ENCODE measurements at regions of chr1 and their contacts with region 1.

Region 1: GRCh38 chr1:156689035-156689952 is 12.1 kb upstream of the NES start:
- DNase-seq: peak; percentile 80
- H3K4me3 ChIP-seq: no peak overlapping the region
- H3K27ac ChIP-seq: no peak overlapping the region
- H3K4me1 ChIP-seq: peaks cover 4 to 28% (median 12%) of the 10 kb centered on the region in 4 donors
- H3K27me3 ChIP-seq: peaks cover 89% of the 10 kb centered on the region
- CTCF ChIP-seq: peak; percentile 86 to 92 (median 91)
- EP300 ChIP-seq: no peak
- POLR2A ChIP-seq: no peak

Region 2: GRCh38 chr1:156489166-156489934 is 199.9 kb before region 1 on chr1:
- in situ Hi-C with region 1: no loop called
- intact Hi-C with region 1: no loop called
- DNase-seq: no peak
- H3K4me3 ChIP-seq: peak overlapping the region in 2 of 4 donors; percentile 4 to 32
- H3K27ac ChIP-seq: peak overlapping the region; percentile 69 to 100 (median 100)
- H3K4me1 ChIP-seq: peaks cover 74 to 82% (median 77%) of the 10 kb centered on the region in 4 donors
- H3K27me3 ChIP-seq: no peaks in the 10 kb centered on the region
- CTCF ChIP-seq: no peak
- EP300 ChIP-seq: no peak
- POLR2A ChIP-seq: no peak

Region 3: GRCh38 chr1:156725683-156726280 is 36.5 kb after region 1 on chr1:
- in situ Hi-C with region 1: loop called in 1 of 4 experiments (anchors 5 kb)
- intact Hi-C with region 1: loop called (anchors 1 kb)
- DNase-seq: peak; percentile 91
- H3K4me3 ChIP-seq: peak overlapping the region in 3 of 4 donors; percentile 10 to 71 (median 12)
- H3K27ac ChIP-seq: peak overlapping the region; percentile 42 to 98 (median 74)
- H3K4me1 ChIP-seq: peaks cover 25 to 46% (median 38%) of the 10 kb centered on the region in 4 donors
- H3K27me3 ChIP-seq: no peaks in the 10 kb centered on the region
- CTCF ChIP-seq: peak; percentile 92 to 96 (median 93)
- EP300 ChIP-seq: no peak
- POLR2A ChIP-seq: no peak

Region 4: GRCh38 chr1:156860113-156860627 is 170.9 kb after region 1 on chr1:
- in situ Hi-C with region 1: loop called in 2 of 4 experiments (anchors 25 kb)
- intact Hi-C with region 1: loop called (anchors 10 kb)
- DNase-seq: peak; percentile 30
- H3K4me3 ChIP-seq: peak overlapping the region in 3 of 4 donors; percentile 11 to 37 (median 15)
- H3K27ac ChIP-seq: no peak overlapping the region
- H3K4me1 ChIP-seq: peaks cover 14 to 27% (median 25%) of the 10 kb centered on the region in 4 donors
- H3K27me3 ChIP-seq: peaks cover 85% of the 10 kb centered on the region
- CTCF ChIP-seq: peak; percentile 65 to 77 (median 68)
- EP300 ChIP-seq: no peak
- POLR2A ChIP-seq: no peak